Activated CD8-positive, alpha-beta T cell treated with anti-CD3 and anti-CD28 coated beads for 36 hours (primary cell): ENCODE measurements at regions of chr2 and their contacts with region 1.

Region 1: GRCh38 chr2:6749962-6750361 is 115.7 kb downstream of the CMPK2 start:
- DNase-seq: no peak
- ATAC-seq: no peak
- H3K4me3 Mint-ChIP-seq: no peak overlapping the region
- H3K27ac Mint-ChIP-seq: no peak overlapping the region
- H3K4me1 Mint-ChIP-seq: no peaks in the 10 kb centered on the region
- H3K27me3 Mint-ChIP-seq: peaks cover 21% of the 10 kb centered on the region
- CTCF ChIP-seq: no peak

Region 2: GRCh38 chr2:6443061-6443823 is 306.7 kb before region 1 on chr2:
- CTCF ChIA-PET with region 1: no interaction called
- POLR2A ChIA-PET with region 1: no interaction called
- intact Hi-C with region 1: no loop called
- DNase-seq: no peak
- ATAC-seq: no peak
- H3K4me3 Mint-ChIP-seq: no peak overlapping the region
- H3K27ac Mint-ChIP-seq: no peak overlapping the region
- H3K4me1 Mint-ChIP-seq: no peaks in the 10 kb centered on the region
- H3K27me3 Mint-ChIP-seq: no peaks in the 10 kb centered on the region
- CTCF ChIP-seq: no peak

Region 3: GRCh38 chr2:6773007-6773693 is 23.2 kb after region 1 on chr2:
- CTCF ChIA-PET with region 1: interaction called, 12 read pairs
- POLR2A ChIA-PET with region 1: no interaction called
- intact Hi-C with region 1: no loop called
- DNase-seq: peak; percentile 75
- ATAC-seq: peak; percentile 92
- H3K4me3 Mint-ChIP-seq: no peak overlapping the region
- H3K27ac Mint-ChIP-seq: no peak overlapping the region
- H3K4me1 Mint-ChIP-seq: peaks cover 3% of the 10 kb centered on the region
- H3K27me3 Mint-ChIP-seq: peaks cover 23% of the 10 kb centered on the region
- CTCF ChIP-seq: peak; percentile 99